ENCODE measurements at regions of chr9 and their contacts with region 1.

Region 1: GRCh38 chr9:111896353-111896958 is at the start of gene UGCG:
- DNase-seq: peak; percentile 89
- H3K4me3 Mint-ChIP-seq: peak within 1 kb of the TSS; percentile 80
- H3K27ac Mint-ChIP-seq: peak within 1 kb of the TSS; percentile 80
- H3K4me1 Mint-ChIP-seq: peaks cover 22% of the 10 kb centered on the region
- H3K27me3 Mint-ChIP-seq: no peaks in the 10 kb centered on the region
- total RNA-seq, gene UGCG: 20.9 to 21.4 TPM

Region 2: DNA sequence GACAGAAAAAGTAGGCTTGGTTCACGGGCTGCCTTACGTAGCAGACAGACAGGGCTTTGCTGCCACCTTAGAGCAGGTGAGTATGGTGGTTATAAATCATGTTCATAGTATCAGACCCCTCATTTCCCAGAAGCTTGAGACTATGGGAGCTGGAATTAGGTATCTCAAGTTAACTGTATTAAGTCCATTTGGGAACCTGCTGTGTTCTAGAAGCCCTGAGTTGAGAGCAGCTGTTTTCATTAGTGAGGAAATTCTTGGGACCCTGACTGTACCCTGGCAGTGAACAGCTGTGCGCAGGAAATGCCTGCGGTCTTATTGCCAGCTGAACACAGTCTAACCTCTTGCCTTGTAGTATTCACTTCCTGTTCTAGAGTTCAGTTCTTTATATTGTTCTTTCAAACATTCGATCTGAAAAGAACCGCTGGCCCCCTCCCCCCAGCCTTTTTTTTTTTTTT is 30.0 kb after region 1 on chr9:
- CTCF ChIA-PET with region 1: interaction called, 3 read pairs
- POLR2A ChIA-PET with region 1: interaction called, 41 read pairs
- DNase-seq: peak; percentile 72
- H3K4me3 Mint-ChIP-seq: no peak overlapping the region
- H3K27ac Mint-ChIP-seq: peak overlapping the region; percentile 71
- H3K4me1 Mint-ChIP-seq: peaks cover 29% of the 10 kb centered on the region
- H3K27me3 Mint-ChIP-seq: no peaks in the 10 kb centered on the region

Region 3: GRCh38 chr9:111975709-111976108 is 79.3 kb after region 1 on chr9:
- CTCF ChIA-PET with region 1: no interaction called
- POLR2A ChIA-PET with region 1: no interaction called
- DNase-seq: peak; percentile 20
- H3K4me3 Mint-ChIP-seq: no peak overlapping the region
- H3K27ac Mint-ChIP-seq: no peak overlapping the region
- H3K4me1 Mint-ChIP-seq: no peaks in the 10 kb centered on the region
- H3K27me3 Mint-ChIP-seq: peaks cover 11% of the 10 kb centered on the region

Region 4: GRCh38 chr9:112002131-112002846 is 105.8 kb after region 1 on chr9:
- CTCF ChIA-PET with region 1: no interaction called
- POLR2A ChIA-PET with region 1: interaction called, 14 read pairs
- DNase-seq: peak; percentile 23
- H3K4me3 Mint-ChIP-seq: no peak overlapping the region
- H3K27ac Mint-ChIP-seq: peak overlapping the region; percentile 85
- H3K4me1 Mint-ChIP-seq: peaks cover 23% of the 10 kb centered on the region
- H3K27me3 Mint-ChIP-seq: peaks cover 29% of the 10 kb centered on the region

Region 5: GRCh38 chr9:112074250-112075008 is 178.0 kb after region 1 on chr9:
- CTCF ChIA-PET with region 1: interaction called, 11 read pairs
- POLR2A ChIA-PET with region 1: interaction called, 10 read pairs
- DNase-seq: peak; percentile 71
- H3K4me3 Mint-ChIP-seq: no peak overlapping the region
- H3K27ac Mint-ChIP-seq: no peak overlapping the region
- H3K4me1 Mint-ChIP-seq: peaks cover 19% of the 10 kb centered on the region
- H3K27me3 Mint-ChIP-seq: peaks cover 2% of the 10 kb centered on the region